Activated CD4-positive, alpha-beta memory T cell treated with anti-CD3 and anti-CD28 coated beads for 36 hours (primary cell): ENCODE measurements at regions of chr6 and their contacts with region 1.

Region 1: GRCh38 chr6:118724211-118724610 is 72.8 kb upstream of the CEP85L start:
- DNase-seq: no peak
- H3K4me3 Mint-ChIP-seq: no peak overlapping the region
- H3K27ac Mint-ChIP-seq: peak overlapping the region; percentile 24
- H3K4me1 Mint-ChIP-seq: peaks cover 55% of the 10 kb centered on the region
- H3K27me3 Mint-ChIP-seq: no peaks in the 10 kb centered on the region

Region 2: GRCh38 chr6:118651282-118652050 is 72.7 kb before region 1 on chr6 and contains the start of gene CEP85L:
- CTCF ChIA-PET with region 1: interaction called, 3 read pairs
- POLR2A ChIA-PET with region 1: interaction called, 4 read pairs
- intact Hi-C with region 1: loop called (anchors 1 kb)
- DNase-seq: peak; percentile 93
- H3K4me3 Mint-ChIP-seq: peak within 1 kb of the TSS; percentile 87
- H3K27ac Mint-ChIP-seq: peak within 1 kb of the TSS; percentile 93
- H3K4me1 Mint-ChIP-seq: peaks cover 53% of the 10 kb centered on the region
- H3K27me3 Mint-ChIP-seq: no peaks in the 10 kb centered on the region
- total RNA-seq, gene CEP85L: 21.1 to 23.3 TPM

Region 3: GRCh38 chr6:118678866-118679265 is 45.3 kb before region 1 on chr6:
- CTCF ChIA-PET with region 1: no interaction called
- POLR2A ChIA-PET with region 1: no interaction called
- intact Hi-C with region 1: no loop called
- DNase-seq: no peak
- H3K4me3 Mint-ChIP-seq: no peak overlapping the region
- H3K27ac Mint-ChIP-seq: peak overlapping the region; percentile 23
- H3K4me1 Mint-ChIP-seq: peaks cover 41% of the 10 kb centered on the region
- H3K27me3 Mint-ChIP-seq: no peaks in the 10 kb centered on the region

Region 4: DNA sequence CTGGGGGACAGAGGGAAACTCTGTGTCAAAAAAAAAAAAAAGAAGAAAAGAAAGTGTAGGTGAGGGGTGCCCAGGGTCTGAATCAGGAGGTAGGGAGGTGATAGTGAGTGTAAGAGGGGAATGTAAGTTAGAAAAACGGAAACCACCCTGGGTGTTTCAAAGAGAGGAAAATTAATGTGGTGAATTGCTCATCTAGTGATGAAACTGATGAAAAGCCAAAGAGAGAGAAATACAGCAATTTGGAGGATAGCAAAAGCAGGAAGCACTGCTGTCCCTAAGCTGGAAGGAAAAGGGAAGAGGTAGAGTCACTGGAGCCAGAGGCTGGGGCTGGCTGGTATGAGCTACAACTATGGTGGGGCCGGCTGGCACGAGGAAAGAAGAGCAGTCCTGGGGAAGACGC is 12.2 kb after region 1 on chr6:
- CTCF ChIA-PET with region 1: interaction called, 3 read pairs
- POLR2A ChIA-PET with region 1: no interaction called
- intact Hi-C with region 1: loop called (anchors 1 kb)
- DNase-seq: no peak
- H3K4me3 Mint-ChIP-seq: no peak overlapping the region
- H3K27ac Mint-ChIP-seq: no peak overlapping the region
- H3K4me1 Mint-ChIP-seq: peaks cover 19% of the 10 kb centered on the region
- H3K27me3 Mint-ChIP-seq: peaks cover 3% of the 10 kb centered on the region

Region 5: GRCh38 chr6:118776607-118777549 is 52.7 kb after region 1 on chr6:
- CTCF ChIA-PET with region 1: interaction called, 3 read pairs
- POLR2A ChIA-PET with region 1: no interaction called
- intact Hi-C with region 1: loop called (anchors 2 kb)
- DNase-seq: peak; percentile 79
- H3K4me3 Mint-ChIP-seq: no peak overlapping the region
- H3K27ac Mint-ChIP-seq: no peak overlapping the region
- H3K4me1 Mint-ChIP-seq: peaks cover 20% of the 10 kb centered on the region
- H3K27me3 Mint-ChIP-seq: no peaks in the 10 kb centered on the region

Region 6: GRCh38 chr6:118843685-118844390 is 119.6 kb after region 1 on chr6:
- CTCF ChIA-PET with region 1: no interaction called
- POLR2A ChIA-PET with region 1: no interaction called
- intact Hi-C with region 1: loop called (anchors 1 kb)
- DNase-seq: no peak
- H3K4me3 Mint-ChIP-seq: peak overlapping the region; percentile 33
- H3K27ac Mint-ChIP-seq: peak overlapping the region; percentile 34
- H3K4me1 Mint-ChIP-seq: peaks cover 32% of the 10 kb centered on the region
- H3K27me3 Mint-ChIP-seq: no peaks in the 10 kb centered on the region